ENCODE measurements at regions of chr9 and their contacts with region 1.

Region 1: DNA sequence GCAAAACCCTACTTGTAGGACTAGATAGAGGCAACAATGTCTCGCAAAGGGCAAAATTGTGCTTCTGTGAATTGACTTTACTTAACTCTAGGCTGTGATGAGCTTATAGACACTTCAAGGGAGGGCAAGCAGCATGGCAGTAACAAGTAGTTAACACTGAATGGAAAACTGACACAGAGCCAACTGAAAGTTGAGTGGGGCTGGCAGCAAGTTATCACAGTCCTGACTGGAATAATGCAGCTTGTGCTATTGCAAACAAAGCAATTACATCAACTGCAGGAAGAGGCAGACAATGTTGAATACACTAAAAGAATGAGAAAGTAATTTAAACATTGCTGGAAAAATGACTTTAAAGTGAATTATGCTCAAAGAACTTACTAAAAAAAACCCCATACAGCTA is 62.2 kb downstream of the RNF38 start:
- DNase-seq: no peak
- H3K4me3 ChIP-seq: no peak overlapping the region
- H3K27ac ChIP-seq: no peak overlapping the region
- H3K4me1 ChIP-seq: no peaks in the 10 kb centered on the region
- H3K27me3 ChIP-seq: no peaks in the 10 kb centered on the region
- CTCF ChIP-seq: no peak
- POLR2A ChIP-seq: no peak

Region 2: DNA sequence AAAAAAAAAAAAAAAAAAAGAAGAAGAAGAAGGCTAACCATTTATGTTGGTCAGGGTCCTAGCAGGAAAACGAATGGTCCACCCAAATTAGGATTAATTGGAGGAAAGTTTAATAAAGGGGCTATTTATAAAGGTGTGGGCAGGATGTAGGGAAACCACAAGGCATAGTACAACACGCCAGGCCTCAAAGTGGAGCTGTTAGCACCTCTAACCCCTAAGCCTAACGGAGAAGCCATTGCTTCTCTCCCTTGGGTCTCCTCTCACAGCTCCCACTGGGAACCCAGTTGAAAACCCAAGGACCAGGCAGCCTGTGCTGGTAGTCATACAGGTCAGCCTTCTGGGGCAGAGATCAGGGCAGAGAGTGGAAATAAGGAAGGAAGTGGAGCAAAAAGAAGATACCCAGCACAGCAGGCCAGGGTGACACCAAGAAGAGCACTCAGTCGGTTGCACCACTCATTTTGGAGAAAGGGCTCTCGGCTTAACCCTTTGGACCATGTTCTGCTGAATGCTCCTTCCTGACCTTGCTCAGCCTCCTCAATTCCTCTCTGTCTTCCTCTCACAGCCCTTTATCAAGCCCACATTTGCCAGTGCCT is 210.1 kb before region 1 on chr9:
- intact Hi-C with region 1: loop called (anchors 5 kb)
- DNase-seq: no peak
- H3K4me3 ChIP-seq: no peak overlapping the region
- H3K27ac ChIP-seq: no peak overlapping the region
- H3K4me1 ChIP-seq: no peaks in the 10 kb centered on the region
- H3K27me3 ChIP-seq: no peaks in the 10 kb centered on the region
- CTCF ChIP-seq: no peak
- POLR2A ChIP-seq: no peak